Ascending aorta (tissue), 2 donors: ENCODE measurements at regions of chr10 and their contacts with region 1.

Region 1: DNA sequence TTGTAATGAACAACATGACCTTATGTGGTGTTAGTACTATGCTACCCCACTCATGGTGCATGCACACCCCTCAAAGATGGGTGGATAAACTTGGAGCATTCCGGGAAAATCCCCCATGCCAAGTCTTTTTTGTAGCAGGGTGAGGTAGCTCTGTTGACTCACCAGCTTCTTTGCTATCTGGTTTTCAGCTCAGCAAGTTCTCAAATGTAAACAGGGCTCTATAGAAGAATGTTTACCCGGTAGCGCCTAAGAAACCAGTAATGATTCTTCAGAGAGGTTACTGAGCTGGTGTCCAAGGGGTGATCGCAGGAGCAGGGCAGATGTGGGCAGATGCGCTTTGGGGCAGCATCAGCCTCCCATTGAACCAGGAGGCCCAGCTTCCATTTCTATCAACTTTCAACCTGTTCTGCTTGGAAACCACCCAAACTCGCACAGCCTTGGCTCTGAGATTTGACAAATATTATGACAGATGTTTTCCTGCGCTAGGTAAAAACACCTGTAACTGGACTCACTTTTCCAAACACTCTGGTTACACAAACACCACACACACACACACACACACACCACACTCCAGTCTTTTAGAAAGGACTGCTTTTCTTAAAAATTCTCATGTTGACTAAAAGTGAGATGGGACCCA is 87.8 kb downstream of the ZRANB1 start:
- DNase-seq: no peak
- H3K4me3 ChIP-seq: no peak overlapping the region
- H3K27ac ChIP-seq: peak overlapping the region; percentile 63 to 69
- H3K4me1 ChIP-seq: peaks cover 9 to 49% of the 10 kb centered on the region in 2 donors
- H3K27me3 ChIP-seq: no peaks in the 10 kb centered on the region
- CTCF ChIP-seq: no peak

Region 2: GRCh38 chr10:124992462-124993344 is 37.0 kb before region 1 on chr10:
- intact Hi-C with region 1: loop called (anchors 2 kb)
- DNase-seq: peak in 1 of 2 donors; percentile 87
- H3K4me3 ChIP-seq: no peak overlapping the region
- H3K27ac ChIP-seq: peak overlapping the region; percentile 2 to 35
- H3K4me1 ChIP-seq: peaks cover under 1 to 22% of the 10 kb centered on the region in 2 donors
- H3K27me3 ChIP-seq: no peaks in the 10 kb centered on the region
- CTCF ChIP-seq: peak; percentile 79 to 85 (median 80)

Region 3: DNA sequence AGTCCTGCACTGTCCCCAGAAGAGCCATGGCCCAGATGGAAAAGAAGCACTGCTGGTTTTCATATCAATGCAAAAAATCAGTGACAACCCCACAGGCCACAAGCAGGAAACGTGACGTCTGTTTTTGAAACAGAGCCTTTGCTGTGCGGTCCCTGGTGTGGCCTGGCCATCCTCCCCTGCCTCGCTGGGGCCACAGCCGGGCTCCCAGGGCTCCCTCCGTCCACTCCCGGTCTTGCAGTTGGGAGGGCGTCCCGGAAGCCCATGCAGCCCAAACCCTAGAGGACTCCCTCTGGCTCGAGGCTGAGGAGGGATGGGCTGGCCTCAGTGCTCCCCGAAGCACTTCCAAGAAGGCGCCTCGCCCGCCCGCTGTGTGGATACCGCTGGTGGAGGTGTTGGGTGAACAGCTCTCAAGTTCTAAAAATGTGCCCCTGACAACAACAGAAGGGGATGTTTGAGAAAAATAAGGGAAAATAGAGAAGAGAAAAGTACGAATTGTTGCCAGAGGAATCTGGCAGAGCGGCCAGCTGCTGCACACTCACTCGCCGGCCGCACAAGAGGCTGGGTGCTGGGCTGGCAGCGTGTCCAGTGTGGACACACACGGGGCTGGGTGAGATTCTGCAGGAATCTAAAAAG is 14.3 kb before region 1 on chr10:
- intact Hi-C with region 1: loop called (anchors 1 kb)
- DNase-seq: peak in 1 of 2 donors; percentile 84
- H3K4me3 ChIP-seq: peak overlapping the region in 1 of 2 donors; percentile 44
- H3K27ac ChIP-seq: peak overlapping the region; percentile 90 to 94
- H3K4me1 ChIP-seq: peaks cover 42 to 90% of the 10 kb centered on the region in 2 donors
- H3K27me3 ChIP-seq: no peaks in the 10 kb centered on the region
- CTCF ChIP-seq: no peak